ENCODE measurements at regions of chr3 and their contacts with region 1.

Region 1: GRCh38 chr3:34216711-34217335 is 418.4 kb downstream of the PDCD6IP start:
- DNase-seq: no peak
- H3K4me3 ChIP-seq: no peak overlapping the region
- H3K27ac ChIP-seq: peak overlapping the region; percentile 75
- H3K4me1 ChIP-seq: peaks cover 86% of the 10 kb centered on the region
- H3K27me3 ChIP-seq: no peaks in the 10 kb centered on the region
- CTCF ChIP-seq: no peak

Region 2: GRCh38 chr3:33299395-33300081 is 917.3 kb before region 1 on chr3:
- CTCF ChIA-PET with region 1: no interaction called
- POLR2A ChIA-PET with region 1: no interaction called
- intact Hi-C with region 1: no loop called
- DNase-seq: no peak
- H3K4me3 ChIP-seq: no peak overlapping the region
- H3K27ac ChIP-seq: no peak overlapping the region
- H3K4me1 ChIP-seq: no peaks in the 10 kb centered on the region
- H3K27me3 ChIP-seq: no peaks in the 10 kb centered on the region
- CTCF ChIP-seq: no peak

Region 3: DNA sequence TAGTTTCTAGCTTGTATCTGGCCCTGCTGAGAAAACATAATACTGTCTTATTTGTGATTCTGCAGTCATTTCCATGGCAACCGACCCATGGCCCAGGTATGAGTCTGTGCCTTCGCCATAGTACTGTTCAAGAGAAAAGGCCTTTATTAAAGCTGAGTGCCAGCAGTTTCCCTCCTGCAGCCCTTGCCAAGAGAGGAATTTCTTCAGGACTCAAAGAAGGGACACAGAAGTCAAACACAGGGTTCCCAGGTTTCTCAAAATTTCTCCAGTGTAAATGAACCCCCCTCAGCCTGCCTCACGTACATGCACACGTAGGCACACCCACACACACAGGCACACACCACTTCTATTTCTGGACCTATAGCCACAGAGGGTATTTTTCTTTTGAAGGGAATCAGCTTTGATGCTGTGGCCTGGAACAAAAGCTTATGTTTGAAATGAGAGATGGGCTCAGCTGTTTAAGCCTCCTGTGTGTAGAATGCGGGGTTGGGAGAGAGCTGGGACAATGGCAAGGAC is 149.2 kb before region 1 on chr3:
- CTCF ChIA-PET with region 1: no interaction called
- POLR2A ChIA-PET with region 1: no interaction called
- intact Hi-C with region 1: no loop called
- DNase-seq: no peak
- H3K4me3 ChIP-seq: no peak overlapping the region
- H3K27ac ChIP-seq: no peak overlapping the region
- H3K4me1 ChIP-seq: peaks cover 6% of the 10 kb centered on the region
- H3K27me3 ChIP-seq: no peaks in the 10 kb centered on the region
- CTCF ChIP-seq: no peak

Region 4: GRCh38 chr3:34132069-34132692 is 84.6 kb before region 1 on chr3:
- CTCF ChIA-PET with region 1: no interaction called
- POLR2A ChIA-PET with region 1: interaction called, 12 read pairs
- intact Hi-C with region 1: no loop called
- DNase-seq: no peak
- H3K4me3 ChIP-seq: no peak overlapping the region
- H3K27ac ChIP-seq: no peak overlapping the region
- H3K4me1 ChIP-seq: no peaks in the 10 kb centered on the region
- H3K27me3 ChIP-seq: no peaks in the 10 kb centered on the region
- CTCF ChIP-seq: no peak

Region 5: DNA sequence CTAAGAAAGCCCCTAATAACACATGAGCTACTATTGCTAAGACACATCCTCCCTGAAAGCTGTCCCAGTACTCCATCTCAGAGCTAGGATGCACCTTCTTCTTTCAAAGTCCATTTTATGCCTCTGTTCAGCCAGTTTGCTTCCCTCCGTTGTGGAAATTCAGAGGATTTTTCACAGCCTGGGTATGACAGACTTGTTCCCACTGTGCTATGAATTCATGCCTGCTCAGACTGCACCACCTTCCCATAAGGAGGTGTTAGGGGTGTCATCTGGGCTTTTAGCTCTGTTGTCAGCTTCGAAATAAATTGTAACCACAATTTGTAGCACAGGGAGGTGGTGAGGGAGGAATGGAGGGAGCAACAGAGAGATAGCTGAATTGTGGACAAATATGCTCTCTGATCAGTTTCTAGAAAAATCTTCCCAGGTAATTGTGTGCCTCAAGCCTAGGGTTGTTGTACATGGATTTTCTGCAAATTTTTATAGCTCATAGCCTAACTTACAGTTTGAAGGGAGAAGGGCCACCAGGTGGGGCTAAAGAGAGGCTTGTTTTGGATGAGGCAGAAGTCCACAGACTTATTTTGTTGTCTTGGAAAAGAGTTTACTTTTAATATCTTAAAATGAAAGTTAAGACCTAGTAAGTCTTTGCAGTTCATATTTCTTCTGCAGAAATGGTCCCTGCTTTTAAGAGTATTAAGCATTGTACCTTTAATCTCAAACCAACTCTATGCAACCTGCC is 43.6 kb after region 1 on chr3:
- CTCF ChIA-PET with region 1: interaction called, 3 read pairs
- POLR2A ChIA-PET with region 1: interaction called, 5 read pairs
- intact Hi-C with region 1: loop called (anchors 2 kb)
- DNase-seq: peak; percentile 89
- H3K4me3 ChIP-seq: no peak overlapping the region
- H3K27ac ChIP-seq: peak overlapping the region; percentile 97
- H3K4me1 ChIP-seq: peaks cover 99% of the 10 kb centered on the region
- H3K27me3 ChIP-seq: no peaks in the 10 kb centered on the region
- CTCF ChIP-seq: peak; percentile 83